Sigmoid colon (tissue), 7 donors: ENCODE measurements at regions of chr20 and their contacts with region 1.

Region 1: DNA sequence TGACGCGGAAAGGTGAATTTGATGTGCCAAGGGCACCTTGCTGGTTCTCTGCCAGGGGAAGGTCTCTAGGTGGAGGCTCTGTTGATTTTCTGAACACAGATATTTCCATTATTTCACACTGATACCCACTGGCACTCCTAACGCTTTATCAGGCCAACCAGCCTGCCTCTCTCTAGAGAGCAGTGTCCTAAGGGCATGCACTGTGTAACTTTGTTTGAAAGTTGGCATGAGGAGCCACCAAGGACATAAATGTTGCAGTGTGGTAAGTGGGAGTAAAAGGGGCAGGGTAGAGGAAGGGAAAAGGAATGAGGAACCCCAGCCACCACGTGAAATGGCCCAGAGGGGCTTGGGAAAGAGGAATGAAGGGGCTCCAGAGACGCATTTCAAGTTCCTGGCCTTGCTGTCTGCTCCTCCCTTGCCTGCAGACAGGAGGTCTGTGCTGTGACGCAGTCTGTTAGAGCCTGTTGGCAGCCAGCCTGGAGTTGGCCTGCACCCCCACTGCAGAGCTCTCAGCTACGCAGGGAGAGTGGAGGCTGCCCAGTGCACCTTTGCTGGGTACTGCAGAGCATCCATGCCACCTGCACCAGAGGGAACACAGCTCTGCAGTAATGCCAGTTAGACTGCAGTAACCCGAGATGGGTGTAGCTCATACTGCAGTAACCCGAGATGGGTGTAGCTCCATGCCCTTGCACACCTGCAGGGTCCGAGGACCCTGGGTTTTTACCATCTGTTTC is 86.9 kb upstream of the SNAP25 start:
- DNase-seq: peak; percentile 84
- H3K4me3 ChIP-seq: no peak overlapping the region
- H3K27ac ChIP-seq: peak overlapping the region in 2 of 4 donors; percentile 46 to 56
- H3K4me1 ChIP-seq: peaks cover 0 to 12% (median 6%) of the 10 kb centered on the region in 4 donors
- H3K27me3 ChIP-seq: no peaks in the 10 kb centered on the region
- CTCF ChIP-seq: no peak
- EP300 ChIP-seq: no peak
- POLR2A ChIP-seq: no peak

Region 2: GRCh38 chr20:10225439-10226060 is 93.8 kb after region 1 on chr20:
- intact Hi-C with region 1: loop called (anchors 10 kb)
- DNase-seq: no peak
- H3K4me3 ChIP-seq: no peak overlapping the region
- H3K27ac ChIP-seq: no peak overlapping the region
- H3K4me1 ChIP-seq: no peaks in the 10 kb centered on the region
- H3K27me3 ChIP-seq: peaks cover 0 to 10% (median 0%) of the 10 kb centered on the region in 3 donors
- CTCF ChIP-seq: no peak
- EP300 ChIP-seq: no peak
- POLR2A ChIP-seq: no peak